Activated B cell treated with CpG ODN at 0.5 μM for 24 hours (primary cell): ENCODE measurements at regions of chr2 and their contacts with region 1.

Region 1: DNA sequence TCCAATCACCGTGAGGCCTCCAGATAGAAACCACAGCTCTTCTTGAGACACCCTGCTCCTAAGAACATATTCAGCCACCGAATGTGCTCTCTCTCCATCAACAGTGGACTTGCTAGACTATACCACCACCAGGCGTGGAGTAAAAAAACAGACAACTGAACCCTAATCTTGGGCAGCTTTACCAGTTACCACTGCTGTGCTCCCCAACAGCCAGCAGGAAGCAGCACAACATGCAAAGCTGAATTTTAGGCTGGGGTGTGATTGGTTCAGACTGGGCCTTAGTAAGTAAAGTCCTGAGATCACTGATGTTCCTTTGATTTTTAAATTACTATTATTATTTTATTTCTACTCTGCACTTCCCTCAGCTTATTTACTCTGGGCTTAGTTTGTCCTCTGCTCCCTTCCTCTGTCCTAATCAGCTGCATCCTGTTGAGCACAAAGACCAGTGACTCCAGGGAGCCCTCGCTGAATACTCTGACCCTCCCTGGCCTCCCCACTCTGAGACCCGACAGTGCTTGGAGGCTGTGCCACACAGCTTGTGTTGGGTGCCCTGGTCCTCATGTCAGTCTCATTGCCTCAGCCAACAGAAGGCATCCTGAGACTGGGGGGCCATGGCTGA is 21.9 kb downstream of the MRPL35 start:
- DNase-seq: peak; percentile 50
- ATAC-seq: peak; percentile 77
- H3K4me3 Mint-ChIP-seq: no peak overlapping the region
- H3K27ac Mint-ChIP-seq: no peak overlapping the region
- H3K4me1 Mint-ChIP-seq: peaks cover 21% of the 10 kb centered on the region
- H3K27me3 Mint-ChIP-seq: no peaks in the 10 kb centered on the region
- CTCF ChIP-seq: peak; percentile 57

Region 2: GRCh38 chr2:86201671-86202335 is 19.4 kb before region 1 on chr2:
- CTCF ChIA-PET with region 1: interaction called, 13 read pairs
- POLR2A ChIA-PET with region 1: interaction called, 9 read pairs
- intact Hi-C with region 1: no loop called
- DNase-seq: no peak
- ATAC-seq: no peak
- H3K4me3 Mint-ChIP-seq: no peak overlapping the region
- H3K27ac Mint-ChIP-seq: no peak overlapping the region
- H3K4me1 Mint-ChIP-seq: peaks cover 38% of the 10 kb centered on the region
- H3K27me3 Mint-ChIP-seq: no peaks in the 10 kb centered on the region
- CTCF ChIP-seq: no peak

Region 3: DNA sequence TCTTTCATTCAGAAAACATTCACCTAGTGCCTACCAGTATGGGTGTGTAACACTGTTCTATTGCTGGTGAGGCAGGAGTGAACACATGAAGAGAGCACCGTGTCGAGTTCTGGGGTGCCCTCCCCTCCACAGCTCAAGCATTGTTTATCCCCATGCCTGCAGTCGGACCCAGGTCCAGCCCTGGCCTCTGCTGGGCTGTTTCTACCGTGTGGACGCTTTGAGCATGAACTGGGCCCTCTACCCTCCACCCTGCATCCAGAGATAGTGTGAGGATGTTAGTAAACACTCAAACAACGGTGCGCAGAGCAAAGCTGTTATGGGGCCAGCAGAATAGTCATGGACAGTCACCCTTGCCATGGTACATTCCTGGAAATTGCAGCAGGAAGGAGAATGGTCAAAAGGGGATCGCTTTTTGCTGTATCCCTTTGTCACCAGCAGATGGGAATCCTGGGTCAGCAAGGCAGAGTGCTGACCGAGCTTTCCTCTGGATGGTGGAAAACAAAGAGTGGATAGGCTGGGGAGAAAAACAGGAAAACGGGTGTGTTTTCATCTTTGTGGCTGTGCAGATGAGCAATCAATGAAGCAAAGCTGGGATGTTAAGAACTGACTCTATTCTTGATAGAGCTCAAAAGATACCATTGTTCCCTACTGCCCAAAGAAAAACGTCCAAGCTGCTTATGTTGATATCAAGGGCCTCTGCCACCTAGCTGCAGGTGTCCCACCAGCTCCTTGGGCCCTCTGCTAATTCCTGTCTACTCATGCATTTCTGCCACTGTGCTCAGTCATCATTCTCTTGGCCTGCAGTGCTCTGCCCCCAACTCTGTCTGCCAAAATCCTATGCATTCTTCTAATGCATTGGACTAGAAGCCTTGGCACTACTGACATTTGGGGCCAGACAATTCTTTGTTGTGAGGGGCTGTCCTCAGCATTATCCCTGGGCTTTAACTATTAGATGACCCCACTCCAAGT is 77.5 kb after region 1 on chr2:
- CTCF ChIA-PET with region 1: interaction called, 50 read pairs
- POLR2A ChIA-PET with region 1: no interaction called
- intact Hi-C with region 1: loop called (anchors 1 kb)
- DNase-seq: no peak
- ATAC-seq: no peak
- H3K4me3 Mint-ChIP-seq: no peak overlapping the region
- H3K27ac Mint-ChIP-seq: no peak overlapping the region
- H3K4me1 Mint-ChIP-seq: no peaks in the 10 kb centered on the region
- H3K27me3 Mint-ChIP-seq: peaks cover 26% of the 10 kb centered on the region
- CTCF ChIP-seq: no peak

Region 4: DNA sequence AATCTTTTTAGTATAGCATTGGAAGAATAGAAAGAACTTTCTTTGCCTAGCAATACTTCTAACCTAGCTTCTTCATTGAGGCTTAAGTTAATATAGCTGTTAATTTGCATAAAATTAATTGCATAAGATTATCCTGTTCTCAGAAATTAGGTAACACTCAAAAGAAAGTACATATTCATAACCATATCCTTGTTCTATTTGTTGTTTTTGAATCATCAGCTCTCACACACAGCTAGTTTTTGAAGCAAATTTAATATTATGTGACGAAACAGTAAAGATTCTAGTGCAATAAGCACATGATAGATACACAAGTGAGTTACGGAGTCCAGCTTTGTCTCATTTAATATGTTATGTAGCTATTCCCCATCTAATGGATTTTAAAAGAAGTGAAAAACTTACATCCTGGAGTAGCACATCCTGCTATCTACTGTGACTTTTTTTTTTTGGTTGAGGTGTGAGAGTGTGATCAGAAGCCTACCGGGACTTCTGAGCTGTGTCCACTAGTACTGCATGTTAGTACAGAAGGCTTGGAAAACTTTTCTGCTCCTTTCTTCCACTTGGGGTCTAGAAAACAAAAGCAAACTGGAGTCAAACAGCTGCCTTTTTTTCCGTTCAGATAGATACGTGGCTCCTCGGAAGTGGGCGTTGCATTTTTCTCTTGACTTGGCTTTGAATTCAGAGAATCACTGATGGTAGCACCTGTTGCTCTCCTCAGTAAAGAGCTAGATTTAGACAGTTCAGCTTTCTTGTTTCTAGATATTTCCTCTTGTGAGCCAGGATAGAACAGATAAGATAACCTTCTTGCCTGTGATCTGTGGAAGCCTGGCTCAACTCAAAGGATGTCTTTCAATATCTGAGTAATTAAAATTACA is 247.2 kb after region 1 on chr2:
- CTCF ChIA-PET with region 1: interaction called, 12 read pairs
- POLR2A ChIA-PET with region 1: no interaction called
- intact Hi-C with region 1: no loop called
- DNase-seq: no peak
- ATAC-seq: no peak
- H3K4me3 Mint-ChIP-seq: no peak overlapping the region
- H3K27ac Mint-ChIP-seq: no peak overlapping the region
- H3K4me1 Mint-ChIP-seq: peaks cover 2% of the 10 kb centered on the region
- H3K27me3 Mint-ChIP-seq: no peaks in the 10 kb centered on the region
- CTCF ChIP-seq: no peak

Region 5: DNA sequence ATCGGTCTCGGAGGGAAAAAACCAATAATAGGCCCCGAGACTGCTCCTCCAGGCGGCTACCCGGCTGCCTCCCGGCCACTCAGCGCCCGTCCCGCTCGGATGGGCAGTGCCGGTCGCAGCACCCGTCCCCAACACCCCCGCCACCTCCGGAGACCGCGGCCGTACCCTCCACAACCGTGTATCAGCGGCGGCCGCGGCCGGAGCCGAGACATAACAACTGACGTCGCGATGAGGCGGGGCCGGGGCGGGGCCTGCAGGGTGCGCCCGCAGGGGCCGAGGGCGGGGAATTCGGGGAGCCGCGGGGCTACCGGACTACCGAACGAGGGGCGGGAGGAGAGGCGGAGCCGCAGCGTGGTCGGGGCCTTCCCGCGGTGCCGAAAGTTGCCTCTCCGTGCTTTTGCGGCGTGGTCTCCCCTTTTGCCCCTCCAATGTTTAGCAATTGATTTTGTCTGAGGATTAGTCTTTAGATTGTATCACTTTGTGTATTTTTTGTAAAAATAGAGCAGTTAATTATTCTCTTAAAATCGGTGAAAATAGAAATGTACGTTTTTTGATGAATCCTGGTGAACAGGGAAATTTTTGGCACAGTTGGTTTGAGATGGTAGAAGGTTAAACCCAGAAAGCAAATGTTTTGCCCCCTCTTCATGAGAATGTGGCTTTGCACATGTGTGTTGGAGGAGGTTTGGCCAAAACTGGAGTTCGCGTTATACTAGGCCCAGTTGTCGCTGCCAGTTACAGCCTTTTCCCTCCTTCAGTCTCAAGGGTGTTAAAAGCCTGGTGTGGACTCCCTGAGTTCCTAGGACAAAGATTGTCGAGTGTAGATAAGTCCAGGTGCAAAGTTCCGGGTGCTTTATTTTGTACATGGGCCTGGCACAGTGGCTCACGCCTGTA is 402.7 kb after region 1 on chr2 and contains the start of gene RNF103:
- CTCF ChIA-PET with region 1: no interaction called
- POLR2A ChIA-PET with region 1: no interaction called
- intact Hi-C with region 1: loop called (anchors 5 kb)
- DNase-seq: peak; percentile 98
- ATAC-seq: peak; percentile 86
- H3K4me3 Mint-ChIP-seq: peak within 1 kb of the TSS; percentile 94
- H3K27ac Mint-ChIP-seq: peak within 1 kb of the TSS; percentile 96
- H3K4me1 Mint-ChIP-seq: peaks cover 35% of the 10 kb centered on the region
- H3K27me3 Mint-ChIP-seq: no peaks in the 10 kb centered on the region
- CTCF ChIP-seq: no peak
- total RNA-seq, gene RNF103: 18.6 and 22.2 TPM in 2 replicates